CD4-positive, alpha-beta memory T cell (primary cell): ENCODE measurements at regions of chr7 and their contacts with region 1.

Region 1: GRCh38 chr7:149838224-149838947 is at the start of gene ZNF862:
- DNase-seq: peak; percentile 93 to 96 (median 95)
- H3K4me3 ChIP-seq: peak within 1 kb of the TSS; percentile 21 to 79
- H3K4me3 Mint-ChIP-seq: peak within 1 kb of the TSS; percentile 91 to 97 (median 94)
- H3K27ac ChIP-seq: peak within 1 kb of the TSS; percentile 69
- H3K27ac Mint-ChIP-seq: peak within 1 kb of the TSS; percentile 88 to 97 (median 94)
- H3K4me1 ChIP-seq: peaks cover 16% of the 10 kb centered on the region
- H3K4me1 Mint-ChIP-seq: peaks cover 24 to 44% (median 39%) of the 10 kb centered on the region in 4 donors
- H3K27me3 ChIP-seq: no peaks in the 10 kb centered on the region
- H3K27me3 Mint-ChIP-seq: peaks cover 5 to 10% of the 10 kb centered on the region in 2 donors
- total RNA-seq, gene ZNF862: 84.2 to 88.6 TPM

Region 2: GRCh38 chr7:149714050-149714909 is 124.1 kb before region 1 on chr7:
- CTCF ChIA-PET with region 1: no interaction called
- POLR2A ChIA-PET with region 1: no interaction called
- intact Hi-C with region 1: loop called (anchors 1 kb)
- DNase-seq: peak; percentile 80 to 90 (median 82)
- H3K4me3 ChIP-seq: peak overlapping the region; percentile 60 to 72
- H3K4me3 Mint-ChIP-seq: peak overlapping the region; percentile 76 to 87 (median 83)
- H3K27ac ChIP-seq: peak overlapping the region; percentile 62
- H3K27ac Mint-ChIP-seq: peak overlapping the region in 5 of 7 donors; percentile 35 to 85 (median 64)
- H3K4me1 ChIP-seq: peaks cover 23% of the 10 kb centered on the region
- H3K4me1 Mint-ChIP-seq: peaks cover 16 to 31% (median 18%) of the 10 kb centered on the region in 4 donors
- H3K27me3 ChIP-seq: no peaks in the 10 kb centered on the region
- H3K27me3 Mint-ChIP-seq: no peaks in the 10 kb centered on the region

Region 3: GRCh38 chr7:149854611-149855360 is 16.4 kb after region 1 on chr7:
- CTCF ChIA-PET with region 1: interaction called, 13 read pairs
- POLR2A ChIA-PET with region 1: interaction called, 23 read pairs
- intact Hi-C with region 1: loop called (anchors 2 kb)
- DNase-seq: peak in 3 of 5 donors; percentile 41 to 49 (median 43)
- H3K4me3 ChIP-seq: no peak overlapping the region
- H3K4me3 Mint-ChIP-seq: peak overlapping the region in 6 of 8 donors; percentile 4 to 62 (median 32)
- H3K27ac ChIP-seq: peak overlapping the region; percentile 7
- H3K27ac Mint-ChIP-seq: peak overlapping the region; percentile 54 to 89 (median 83)
- H3K4me1 ChIP-seq: peaks cover 38% of the 10 kb centered on the region
- H3K4me1 Mint-ChIP-seq: peaks cover 36 to 50% (median 37%) of the 10 kb centered on the region in 4 donors
- H3K27me3 ChIP-seq: no peaks in the 10 kb centered on the region
- H3K27me3 Mint-ChIP-seq: no peaks in the 10 kb centered on the region

Region 4: DNA sequence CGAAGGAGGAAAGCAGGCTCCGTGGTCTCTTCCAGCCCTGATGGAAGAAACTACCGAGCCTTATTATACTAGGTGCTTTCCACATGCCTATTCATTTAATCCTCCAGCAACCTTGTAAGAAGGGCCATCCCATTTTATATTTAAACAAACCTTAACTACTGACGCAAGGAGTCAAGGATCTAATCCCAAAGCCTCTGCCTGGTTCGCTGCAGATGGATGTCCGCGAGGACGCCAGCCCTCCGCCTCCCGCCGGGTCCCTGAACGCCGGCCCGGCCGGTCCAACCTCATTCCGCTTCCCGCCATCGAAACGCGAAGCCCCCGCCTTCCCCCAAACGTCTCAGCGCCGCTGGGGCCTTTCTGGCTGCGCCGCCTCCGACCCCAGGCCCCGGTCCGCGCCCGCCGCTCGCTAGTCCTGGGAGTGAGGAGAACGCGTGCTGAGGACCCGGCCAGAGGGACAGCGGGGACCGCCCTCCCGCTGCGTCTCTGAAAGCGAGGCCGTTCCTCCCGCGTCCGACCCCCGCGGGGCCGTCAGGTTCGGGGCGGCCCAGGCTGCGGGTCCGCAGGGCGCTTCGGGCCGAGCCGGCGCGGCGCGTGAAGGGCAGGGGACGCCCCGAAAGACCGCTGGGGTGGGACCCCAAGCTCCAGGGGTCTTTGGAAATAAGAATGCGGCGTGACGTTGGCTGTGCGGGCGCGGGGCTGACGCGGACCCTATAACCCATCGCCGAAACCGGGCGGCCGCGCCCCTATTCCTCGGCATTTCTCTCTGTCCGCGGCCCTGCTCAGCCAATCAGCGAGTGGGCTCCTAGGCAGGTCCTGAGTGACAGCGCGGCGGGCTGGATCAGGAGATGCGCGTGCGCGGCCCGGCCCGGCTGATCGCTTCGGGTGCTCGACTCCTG is 34.9 kb after region 1 on chr7 and contains the start of gene ATP6V0E2:
- CTCF ChIA-PET with region 1: interaction called, 26 read pairs
- POLR2A ChIA-PET with region 1: interaction called, 166 read pairs
- intact Hi-C with region 1: loop called (anchors 1 kb)
- DNase-seq: peak; percentile 88 to 91 (median 90)
- H3K4me3 ChIP-seq: peak within 1 kb of the TSS; percentile 61 to 82
- H3K4me3 Mint-ChIP-seq: peak within 1 kb of the TSS; percentile 85 to 93 (median 90)
- H3K27ac ChIP-seq: peak within 1 kb of the TSS; percentile 78
- H3K27ac Mint-ChIP-seq: peak within 1 kb of the TSS; percentile 89 to 93 (median 92)
- H3K4me1 ChIP-seq: peaks cover 83% of the 10 kb centered on the region
- H3K4me1 Mint-ChIP-seq: peaks cover 63 to 76% (median 66%) of the 10 kb centered on the region in 4 donors
- H3K27me3 ChIP-seq: no peaks in the 10 kb centered on the region
- H3K27me3 Mint-ChIP-seq: no peaks in the 10 kb centered on the region
- total RNA-seq, gene ATP6V0E2: 64.6 to 65.3 TPM

Region 5: GRCh38 chr7:151226875-151227782 is 1388.7 kb after region 1 on chr7 and contains the start of gene ABCF2:
- CTCF ChIA-PET with region 1: no interaction called
- POLR2A ChIA-PET with region 1: no interaction called
- intact Hi-C with region 1: loop called (anchors 1 kb)
- DNase-seq: peak; percentile 94 to 99 (median 95)
- H3K4me3 ChIP-seq: peak within 1 kb of the TSS; percentile 62 to 80
- H3K4me3 Mint-ChIP-seq: peak within 1 kb of the TSS; percentile 95 to 100 (median 96)
- H3K27ac ChIP-seq: peak within 1 kb of the TSS; percentile 83
- H3K27ac Mint-ChIP-seq: peak within 1 kb of the TSS; percentile 95 to 98 (median 96)
- H3K4me1 ChIP-seq: peaks cover 34% of the 10 kb centered on the region
- H3K4me1 Mint-ChIP-seq: peaks cover 29 to 52% (median 40%) of the 10 kb centered on the region in 4 donors
- H3K27me3 ChIP-seq: no peaks in the 10 kb centered on the region
- H3K27me3 Mint-ChIP-seq: no peaks in the 10 kb centered on the region
- total RNA-seq, gene ABCF2: 31.4 to 35.7 TPM